ENCODE measurements at regions of chr21 and their contacts with region 1.

Region 1: GRCh38 chr21:34073032-34073869 is at the starts of genes MRPS6 and SLC5A3:
- DNase-seq: peak; percentile 68
- H3K4me3 Mint-ChIP-seq: peak within 1 kb of the TSS; percentile 95
- H3K27ac Mint-ChIP-seq: peak within 1 kb of the TSS; percentile 88
- H3K4me1 Mint-ChIP-seq: peaks cover 43% of the 10 kb centered on the region
- H3K27me3 Mint-ChIP-seq: no peaks in the 10 kb centered on the region
- total RNA-seq, gene MRPS6: 117 and 120 TPM in 2 replicates
- total RNA-seq, gene SLC5A3: 41.0 and 41.2 TPM in 2 replicates

Region 2: DNA sequence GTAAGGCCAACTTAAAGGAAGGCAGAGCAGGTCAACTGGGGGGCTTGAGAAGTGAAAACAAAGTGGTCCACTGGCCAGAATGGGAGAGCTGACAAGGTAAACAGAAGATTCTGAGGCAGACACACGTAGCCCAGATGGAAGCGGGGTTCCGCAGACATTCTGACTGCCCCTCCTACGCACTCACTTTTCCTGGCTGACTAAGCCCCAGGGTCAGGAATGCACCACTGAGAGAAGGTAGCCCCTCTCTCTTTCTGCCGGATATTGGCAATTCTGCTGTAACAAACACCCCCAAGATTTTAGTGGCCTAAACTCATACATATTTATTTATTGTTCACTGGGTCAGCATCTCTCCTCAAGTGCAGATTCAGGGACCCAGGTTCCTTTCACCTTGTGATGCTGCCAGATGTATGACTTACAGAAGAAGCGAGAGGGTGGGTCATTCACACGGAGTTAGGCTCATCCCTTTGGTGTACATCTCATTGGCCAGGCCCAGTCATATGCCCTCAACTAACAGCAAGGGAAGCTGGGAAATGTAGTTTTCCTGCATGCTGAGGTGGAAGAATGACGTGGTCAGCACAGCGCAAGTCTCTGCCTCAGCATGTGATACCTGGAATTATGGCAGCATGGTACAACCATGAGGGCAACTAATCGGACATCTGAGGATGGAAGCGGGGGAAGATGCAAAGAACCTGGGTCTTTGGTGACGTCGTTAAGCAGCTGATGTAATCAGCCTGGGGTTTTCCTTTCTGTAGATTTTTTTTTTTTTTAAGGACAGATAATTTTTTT is 43.3 kb before region 1 on chr21:
- intact Hi-C with region 1: loop called (anchors 5 kb)
- DNase-seq: peak; percentile 35
- H3K4me3 Mint-ChIP-seq: no peak overlapping the region
- H3K27ac Mint-ChIP-seq: peak overlapping the region; percentile 92
- H3K4me1 Mint-ChIP-seq: peaks cover 26% of the 10 kb centered on the region
- H3K27me3 Mint-ChIP-seq: no peaks in the 10 kb centered on the region

Measured in activated T-helper 2 cell treated with anti-CD3 and anti-CD28 coated beads, Interferon-gamma antibody, Interleukin-2, Interleukin-4, amounts not matched to agents 10 μg/mL and 5 μg/mL and 100 μg/mL, durations not matched to agents 14 hours and 24 hours and 36 hours (primary cell).